ENCODE measurements at regions of chr5 and their contacts with region 1.

Region 1: GRCh38 chr5:173615884-173616576 is 420 bp downstream of the BOD1 start:
- DNase-seq: peak; percentile 88

Region 2: GRCh38 chr5:173178369-173178910 is 437.6 kb before region 1 on chr5:
- intact Hi-C with region 1: no loop called
- DNase-seq: peak; percentile 10

Region 3: DNA sequence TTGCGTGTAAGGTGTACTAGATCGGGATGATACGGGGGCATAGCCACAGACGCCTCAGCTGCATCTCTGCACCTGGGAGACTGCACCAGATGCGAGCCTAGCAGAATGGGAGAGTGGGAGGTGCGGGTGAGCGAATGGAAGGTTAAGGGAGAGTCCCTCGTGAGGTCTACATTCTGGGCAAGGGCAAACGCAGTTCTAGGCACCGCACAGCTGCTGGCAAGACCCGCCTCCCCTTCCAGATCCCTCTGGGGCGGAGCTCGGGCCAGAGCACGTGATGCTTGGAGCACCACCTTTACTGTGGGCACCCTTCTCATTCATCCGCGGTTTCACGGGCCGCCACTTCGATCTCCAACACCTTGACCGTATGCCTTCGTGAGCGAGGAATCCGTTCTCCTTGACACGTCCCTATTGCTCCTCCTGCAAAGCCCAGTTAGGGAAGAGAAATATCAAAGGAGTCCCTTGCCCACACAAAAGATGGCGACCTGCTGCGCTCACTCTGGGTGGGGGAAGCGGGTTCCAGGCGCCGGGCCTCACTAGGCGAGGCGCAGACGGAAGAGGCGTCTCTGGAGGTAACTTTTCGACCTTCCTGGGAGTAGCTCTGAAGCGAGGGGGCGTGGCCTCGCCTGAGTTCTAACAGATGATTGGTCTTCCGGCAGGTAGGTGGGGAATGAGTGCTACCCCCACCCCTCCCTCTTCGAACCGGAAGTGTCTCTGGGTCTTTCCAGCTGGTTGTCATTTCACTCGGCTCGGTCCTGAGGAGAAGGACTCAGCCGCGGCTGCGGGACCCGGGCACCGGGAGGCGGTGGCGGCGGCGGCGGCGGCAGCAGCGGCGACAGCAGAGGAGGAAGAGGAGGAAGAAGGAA is 271.8 kb after region 1 on chr5 and contains the start of gene CPEB4:
- intact Hi-C with region 1: loop called in 1 of 2 experiments (anchors 5 kb)
- DNase-seq: peak; percentile 100
- total RNA-seq, gene CPEB4: 51.9 to 102 TPM